Aorta (tissue), 5 donors: ENCODE measurements at regions of chr22 and their contacts with region 1.

Region 1: DNA sequence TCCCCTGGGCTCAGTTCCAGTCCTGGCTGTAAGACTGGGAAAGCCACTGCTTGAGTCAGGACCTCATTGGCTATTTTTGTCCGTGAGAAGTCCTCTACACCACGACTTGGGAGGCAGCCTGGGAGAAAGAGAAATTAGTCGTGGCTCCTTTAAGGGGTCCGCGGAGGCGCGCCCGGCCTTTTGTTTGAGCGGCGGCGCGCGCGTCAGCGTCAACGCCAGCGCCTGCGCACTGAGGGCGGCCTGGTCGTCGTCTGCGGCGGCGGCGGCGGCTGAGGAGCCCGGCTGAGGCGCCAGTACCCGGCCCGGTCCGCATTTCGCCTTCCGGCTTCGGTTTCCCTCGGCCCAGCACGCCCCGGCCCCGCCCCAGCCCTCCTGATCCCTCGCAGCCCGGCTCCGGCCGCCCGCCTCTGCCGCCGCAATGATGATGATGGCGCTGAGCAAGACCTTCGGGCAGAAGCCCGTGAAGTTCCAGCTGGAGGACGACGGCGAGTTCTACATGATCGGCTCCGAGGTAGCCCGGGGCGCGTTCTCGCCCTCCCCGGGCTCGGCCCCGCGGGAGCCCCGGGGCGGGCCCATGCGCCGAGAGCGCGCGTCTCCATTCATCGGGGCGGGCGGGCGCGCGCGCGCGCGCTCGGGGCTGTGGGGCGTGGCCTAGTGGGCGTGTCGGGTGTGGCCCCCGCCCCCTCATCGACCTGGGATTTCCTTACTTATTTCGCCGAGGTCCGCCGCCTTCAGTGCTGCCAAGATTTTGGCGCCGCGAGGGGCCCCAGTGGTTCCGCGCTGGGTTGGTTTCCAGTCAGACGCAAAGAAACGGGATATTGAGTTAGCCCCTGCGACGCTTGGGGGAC is at the start of gene SMARCB1:
- DNase-seq: peak; percentile 95 to 97
- ATAC-seq: peak; percentile 95
- H3K4me3 ChIP-seq: peak within 1 kb of the TSS; percentile 64 to 82
- H3K27ac ChIP-seq: peak within 1 kb of the TSS; percentile 47 to 87
- H3K4me1 ChIP-seq: no peaks in the 10 kb centered on the region
- H3K27me3 ChIP-seq: no peaks in the 10 kb centered on the region
- total RNA-seq, gene SMARCB1: 48.3 to 53.5 TPM

Region 2: GRCh38 chr22:22810018-22810427 is 977.0 kb before region 1 on chr22:
- intact Hi-C with region 1: no loop called
- DNase-seq: peak in 1 of 2 donors; percentile 69
- ATAC-seq: no peak
- H3K4me3 ChIP-seq: no peak overlapping the region
- H3K27ac ChIP-seq: no peak overlapping the region
- H3K4me1 ChIP-seq: no peaks in the 10 kb centered on the region
- H3K27me3 ChIP-seq: no peaks in the 10 kb centered on the region

Region 3: GRCh38 chr22:23649071-23649501 is 137.9 kb before region 1 on chr22:
- intact Hi-C with region 1: no loop called
- DNase-seq: peak in 1 of 2 donors; percentile 67
- ATAC-seq: peak; percentile 37
- H3K4me3 ChIP-seq: no peak overlapping the region
- H3K27ac ChIP-seq: no peak overlapping the region
- H3K4me1 ChIP-seq: no peaks in the 10 kb centered on the region
- H3K27me3 ChIP-seq: no peaks in the 10 kb centered on the region

Region 4: GRCh38 chr22:23722724-23723123 is 64.3 kb before region 1 on chr22:
- intact Hi-C with region 1: no loop called
- DNase-seq: no peak
- ATAC-seq: no peak
- H3K4me3 ChIP-seq: no peak overlapping the region
- H3K27ac ChIP-seq: no peak overlapping the region
- H3K4me1 ChIP-seq: no peaks in the 10 kb centered on the region
- H3K27me3 ChIP-seq: no peaks in the 10 kb centered on the region

Region 5: GRCh38 chr22:23750714-23751440 is 36.1 kb before region 1 on chr22 and contains the start of gene ZNF70:
- intact Hi-C with region 1: loop called in 1 of 2 experiments (anchors 1 kb)
- DNase-seq: peak; percentile 92 to 94
- ATAC-seq: peak; percentile 95
- H3K4me3 ChIP-seq: peak within 1 kb of the TSS; percentile 42 to 81
- H3K27ac ChIP-seq: peak within 1 kb of the TSS; percentile 53 to 88
- H3K4me1 ChIP-seq: no peaks in the 10 kb centered on the region
- H3K27me3 ChIP-seq: no peaks in the 10 kb centered on the region
- total RNA-seq, gene ZNF70: 9.8 to 14.0 TPM

Region 6: GRCh38 chr22:23767673-23768548 is 19.1 kb before region 1 on chr22 and contains the start of gene CHCHD10:
- intact Hi-C with region 1: loop called in 1 of 2 experiments (anchors 2 kb)
- DNase-seq: peak; percentile 92 to 95
- ATAC-seq: peak; percentile 88
- H3K4me3 ChIP-seq: peak within 1 kb of the TSS; percentile 32 to 71
- H3K27ac ChIP-seq: peak within 1 kb of the TSS in 1 of 2 donors; percentile 2
- H3K4me1 ChIP-seq: no peaks in the 10 kb centered on the region
- H3K27me3 ChIP-seq: no peaks in the 10 kb centered on the region
- total RNA-seq, gene CHCHD10: 30.9 to 41.9 TPM

Region 7: GRCh38 chr22:23838681-23839468 is 51.9 kb after region 1 on chr22 and contains the start of gene DERL3:
- intact Hi-C with region 1: loop called in 1 of 2 experiments (anchors 2 kb)
- DNase-seq: peak; percentile 99 to 100
- ATAC-seq: peak; percentile 94
- H3K4me3 ChIP-seq: no peak within 1 kb of the TSS
- H3K27ac ChIP-seq: no peak within 1 kb of the TSS
- H3K4me1 ChIP-seq: no peaks in the 10 kb centered on the region
- H3K27me3 ChIP-seq: no peaks in the 10 kb centered on the region
- total RNA-seq, gene DERL3: 1.9 to 3.9 TPM

Region 8: DNA sequence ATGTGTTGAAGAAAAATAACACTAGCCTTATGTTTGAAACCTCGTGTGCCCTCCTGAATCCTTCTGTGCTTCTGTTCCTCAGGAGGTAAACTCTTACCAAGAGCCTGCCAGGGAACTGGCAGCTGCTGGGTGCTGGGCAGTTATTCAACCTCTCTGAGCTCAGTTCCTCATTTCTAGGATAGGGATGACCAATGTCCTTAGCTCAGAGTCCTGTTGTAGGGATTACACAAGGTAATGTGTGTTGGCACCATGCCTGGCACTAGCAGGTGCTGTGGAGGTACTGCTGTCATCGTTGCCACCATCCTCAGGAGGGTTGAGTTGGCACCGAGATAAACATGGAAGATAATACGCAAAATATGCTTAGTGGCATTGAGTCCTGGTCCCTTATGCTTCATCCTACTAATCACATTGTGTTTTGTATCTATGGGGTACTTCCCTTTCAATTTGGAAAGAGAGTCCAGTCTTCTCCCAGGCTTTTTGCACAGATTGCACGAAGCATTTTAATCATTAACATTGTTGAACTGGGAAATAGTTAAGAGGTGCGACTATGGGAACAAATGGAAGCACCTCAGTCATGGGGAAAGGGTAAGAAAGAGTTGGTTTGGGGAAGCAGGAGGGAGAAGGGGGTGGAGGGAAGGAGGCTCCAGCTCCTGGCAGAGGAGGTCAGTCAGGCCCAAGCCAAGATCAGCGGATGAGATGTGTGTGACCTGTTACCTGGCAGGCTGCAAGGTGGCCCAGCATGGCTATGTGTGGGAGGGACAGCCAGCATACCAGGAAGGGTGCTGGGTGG is 280.8 kb after region 1 on chr22:
- intact Hi-C with region 1: no loop called
- DNase-seq: peak in 1 of 2 donors; percentile 11
- ATAC-seq: no peak
- H3K4me3 ChIP-seq: no peak overlapping the region
- H3K27ac ChIP-seq: no peak overlapping the region
- H3K4me1 ChIP-seq: no peaks in the 10 kb centered on the region
- H3K27me3 ChIP-seq: no peaks in the 10 kb centered on the region